ENCODE measurements at regions of chr5 and their contacts with region 1.

Region 1: DNA sequence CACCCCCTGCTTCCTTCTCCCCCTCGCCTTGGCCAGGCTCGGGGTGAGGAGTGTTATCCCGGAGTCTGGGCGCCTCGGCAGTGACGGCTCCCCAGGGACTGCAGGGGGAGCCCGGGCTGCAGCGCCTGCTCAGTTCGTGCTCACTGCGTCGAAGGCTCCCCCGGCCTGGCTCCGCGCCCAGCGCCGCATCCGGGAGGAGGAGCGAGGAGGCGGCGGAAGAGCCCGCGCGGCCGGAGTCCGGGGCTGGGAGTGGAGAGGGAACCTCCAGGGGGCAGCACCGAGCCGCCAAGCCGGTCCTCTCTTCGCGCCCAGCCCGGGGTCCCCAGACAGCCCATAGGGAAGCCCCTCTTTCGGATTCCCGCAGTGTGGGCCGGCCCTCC is 1.3 kb upstream of the EGR1 start:
- DNase-seq: peak; percentile 75 to 97 (median 94)

Region 2: DNA sequence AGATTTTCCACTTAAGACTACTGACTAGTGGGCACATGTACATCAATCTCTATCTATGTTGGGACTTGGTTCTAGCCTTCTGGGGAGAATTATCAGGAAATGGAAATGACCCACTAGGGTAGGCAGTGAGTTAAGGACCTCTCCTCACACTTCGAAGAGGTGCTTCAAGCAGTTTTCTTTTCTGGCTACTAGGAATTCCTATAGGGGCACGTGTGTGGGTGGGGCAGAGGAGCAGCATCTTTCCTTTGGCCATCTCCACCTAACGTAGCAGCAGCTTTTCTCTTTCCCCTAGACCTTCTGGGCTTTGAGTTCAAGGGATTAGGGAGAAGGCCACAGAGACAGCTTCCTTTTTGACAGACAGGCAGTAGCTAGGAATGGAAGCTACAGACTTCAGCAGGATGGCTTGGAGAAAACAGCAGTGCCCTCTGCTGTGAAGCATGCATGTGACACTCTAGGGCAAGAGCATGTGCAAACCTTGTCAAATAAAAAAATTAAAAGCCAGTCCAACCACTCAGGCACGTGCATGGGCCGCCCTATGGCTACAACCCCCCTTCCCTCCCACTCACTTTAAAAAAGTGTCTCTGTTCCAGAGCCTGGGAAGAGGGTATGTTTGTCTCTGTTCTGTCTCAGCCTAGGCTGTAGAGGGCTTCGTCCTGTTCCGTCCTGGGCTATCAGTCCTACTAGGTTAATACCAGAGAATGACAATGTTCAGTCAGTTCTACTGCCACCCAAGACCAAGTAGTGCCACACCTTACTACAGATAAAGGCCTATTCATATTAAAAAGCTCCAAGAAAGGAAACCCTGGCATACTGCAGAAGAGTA is 180.9 kb before region 1 on chr5:
- intact Hi-C with region 1: no loop called
- DNase-seq: peak in 32 of 42 donors; percentile 5 to 60 (median 28)

Region 3: DNA sequence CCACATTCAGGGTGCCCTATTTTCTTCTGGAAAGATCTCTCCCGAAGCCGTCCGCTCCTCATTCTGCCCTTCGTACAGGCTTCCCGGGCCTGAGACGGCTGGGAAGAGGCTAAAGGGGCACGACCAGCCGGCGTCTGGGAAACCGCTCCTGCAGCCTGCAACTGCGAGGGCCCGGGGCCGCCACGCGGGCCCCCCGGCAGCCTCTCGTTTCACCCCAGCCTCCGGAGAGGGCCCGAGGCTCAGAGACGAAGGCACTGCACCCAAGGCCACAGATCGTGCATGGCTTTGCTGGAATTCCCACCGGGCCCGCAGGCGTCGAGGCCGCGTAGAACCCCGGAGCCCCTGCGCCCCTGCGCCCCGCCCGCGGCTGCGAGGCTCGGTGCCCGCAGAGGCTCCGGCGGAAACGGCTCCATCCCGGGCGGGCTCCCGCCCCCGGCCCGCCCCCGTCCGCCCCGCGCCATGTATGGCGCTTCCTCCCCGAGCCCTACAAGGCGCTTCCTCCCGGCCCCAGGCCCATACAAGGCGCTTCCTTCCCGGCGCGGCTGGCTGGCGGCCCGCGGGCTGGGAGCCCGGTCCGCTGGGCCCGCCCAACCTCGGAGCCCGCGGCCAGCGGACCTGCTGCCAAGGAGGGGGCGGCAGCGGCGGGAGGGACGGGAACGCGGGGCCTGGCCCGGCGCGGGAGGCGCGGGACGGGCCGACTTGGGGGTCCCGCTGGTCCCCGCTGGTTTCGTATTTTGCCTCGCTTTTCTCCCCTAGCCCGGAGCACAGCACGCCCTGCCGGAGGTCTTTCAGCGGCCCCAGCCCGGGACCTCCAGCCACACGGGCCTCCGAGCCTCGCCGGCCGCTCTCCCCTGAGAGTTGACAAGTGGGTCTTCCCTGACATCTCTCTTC is 27.9 kb after region 1 on chr5:
- intact Hi-C with region 1: loop called (anchors 1 kb)
- DNase-seq: peak; percentile 74 to 97 (median 93)

Region 4: DNA sequence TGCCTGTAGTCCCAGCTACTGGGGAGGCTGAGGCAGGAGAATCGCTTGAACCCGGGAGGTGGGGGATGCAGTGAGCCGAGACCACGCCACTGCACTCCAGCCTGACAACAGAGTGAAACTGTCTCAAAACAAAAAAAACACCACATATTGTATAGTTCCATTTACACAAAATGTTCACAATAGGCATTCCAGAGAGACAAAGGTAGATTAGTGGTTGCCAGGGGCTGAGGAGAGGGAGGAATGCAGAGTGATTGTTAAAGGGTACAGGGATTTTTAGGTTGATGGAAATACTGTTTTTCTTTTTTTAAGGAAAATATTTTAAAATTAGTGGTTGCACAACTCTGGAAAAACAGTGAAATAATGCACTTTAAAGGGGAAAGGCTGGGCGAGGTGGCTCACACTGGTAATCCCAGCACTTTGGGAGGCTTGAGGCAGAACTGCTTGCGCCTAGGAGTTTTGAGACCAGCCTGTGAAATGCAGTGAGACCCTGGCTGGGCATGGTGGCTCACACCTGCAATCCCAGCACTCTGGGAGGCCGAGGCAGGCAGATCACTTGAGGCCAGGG is 59.5 kb after region 1 on chr5:
- intact Hi-C with region 1: no loop called
- DNase-seq: no peak